ENCODE measurements at regions of chr3 and their contacts with region 1.

Region 1: DNA sequence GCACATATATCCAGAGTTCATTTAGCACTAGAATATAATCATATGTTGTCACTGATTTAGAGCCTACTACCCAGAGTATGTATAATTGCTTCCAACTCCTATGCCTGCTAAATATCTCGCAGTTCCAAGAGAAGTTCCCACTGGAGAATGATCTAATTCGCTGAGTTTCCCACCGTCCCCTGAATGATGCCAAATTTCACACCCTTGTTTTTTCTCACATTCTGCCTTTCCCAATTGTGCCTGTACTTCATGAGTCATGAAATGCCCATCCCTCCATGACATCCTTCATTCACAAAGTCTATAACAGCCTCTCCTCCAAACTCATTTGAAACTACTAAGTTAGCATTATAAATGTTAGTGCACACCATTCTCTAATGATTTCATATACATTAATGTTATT is 177.2 kb downstream of the CBLB start:
- DNase-seq: no peak
- ATAC-seq: peak; percentile 32 to 71 (median 48)
- H3K4me3 ChIP-seq: no peak overlapping the region
- H3K27ac ChIP-seq: peak overlapping the region in 3 of 12 donors; percentile 2 to 3 (median 3)
- H3K4me1 ChIP-seq: peaks cover 0 to 47% (median 13%) of the 10 kb centered on the region in 12 donors
- H3K27me3 ChIP-seq: no peaks in the 10 kb centered on the region
- CTCF ChIP-seq: no peak
- POLR2A ChIP-seq: no peak

Region 2: GRCh38 chr3:104951426-104951825 is 740.2 kb before region 1 on chr3:
- intact Hi-C with region 1: no loop called
- DNase-seq: no peak
- ATAC-seq: no peak
- H3K4me3 ChIP-seq: no peak overlapping the region
- H3K27ac ChIP-seq: no peak overlapping the region
- H3K4me1 ChIP-seq: no peaks in the 10 kb centered on the region
- H3K27me3 ChIP-seq: no peaks in the 10 kb centered on the region
- CTCF ChIP-seq: no peak
- POLR2A ChIP-seq: no peak

Region 3: GRCh38 chr3:105747060-105747541 is 55.5 kb after region 1 on chr3:
- intact Hi-C with region 1: loop called in 1 of 10 experiments (anchors 10 kb)
- DNase-seq: no peak
- ATAC-seq: peak in 3 of 4 donors; percentile 51 to 83 (median 75)
- H3K4me3 ChIP-seq: no peak overlapping the region
- H3K27ac ChIP-seq: peak overlapping the region in 7 of 12 donors; percentile 22 to 80 (median 45)
- H3K4me1 ChIP-seq: peaks cover 3 to 65% (median 26%) of the 10 kb centered on the region in 12 donors
- H3K27me3 ChIP-seq: no peaks in the 10 kb centered on the region
- CTCF ChIP-seq: no peak
- POLR2A ChIP-seq: no peak

Region 4: DNA sequence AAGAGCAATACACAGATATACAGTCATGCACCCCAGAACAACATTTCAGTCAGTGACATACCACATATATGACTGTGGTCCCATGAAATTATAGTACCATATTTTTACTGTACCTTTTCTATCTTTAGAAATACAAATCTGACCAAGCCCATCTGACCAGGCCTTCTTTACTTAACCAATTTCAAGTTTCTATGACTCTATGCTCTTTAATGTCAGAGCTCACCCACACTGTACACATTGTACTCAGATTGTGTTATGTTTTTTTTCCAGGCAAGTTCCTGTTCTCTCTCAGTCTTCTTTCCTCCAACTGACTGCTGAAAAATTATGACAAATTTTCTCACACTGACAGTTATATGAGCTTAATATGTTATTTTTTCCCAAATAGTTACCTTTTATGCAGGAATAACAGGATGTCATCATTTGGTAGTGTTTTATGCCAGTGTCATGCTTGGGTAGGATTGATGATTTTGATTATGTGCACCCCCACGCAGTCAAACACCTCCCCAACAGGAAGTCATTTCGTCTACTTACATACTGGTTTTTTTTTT is 185.2 kb after region 1 on chr3:
- intact Hi-C with region 1: loop called in 1 of 10 experiments (anchors 10 kb)
- DNase-seq: no peak
- ATAC-seq: peak in 3 of 4 donors; percentile 28 to 61 (median 39)
- H3K4me3 ChIP-seq: no peak overlapping the region
- H3K27ac ChIP-seq: peak overlapping the region in 1 of 12 donors; percentile 29
- H3K4me1 ChIP-seq: peaks cover 0 to 18% (median 0%) of the 10 kb centered on the region in 12 donors
- H3K27me3 ChIP-seq: no peaks in the 10 kb centered on the region
- CTCF ChIP-seq: no peak
- POLR2A ChIP-seq: no peak